HEK293T (cell line): ENCODE measurements at regions of chr4 and their contacts with region 1.

Region 1: GRCh38 chr4:113355550-113356371 is 306.3 kb downstream of the ANK2 start:
- DNase-seq: peak; percentile 8

Region 2: GRCh38 chr4:113260688-113261087 is 95.1 kb before region 1 on chr4:
- CTCF ChIA-PET with region 1: no interaction called
- POLR2A ChIA-PET with region 1: no interaction called
- DNase-seq: no peak

Region 3: DNA sequence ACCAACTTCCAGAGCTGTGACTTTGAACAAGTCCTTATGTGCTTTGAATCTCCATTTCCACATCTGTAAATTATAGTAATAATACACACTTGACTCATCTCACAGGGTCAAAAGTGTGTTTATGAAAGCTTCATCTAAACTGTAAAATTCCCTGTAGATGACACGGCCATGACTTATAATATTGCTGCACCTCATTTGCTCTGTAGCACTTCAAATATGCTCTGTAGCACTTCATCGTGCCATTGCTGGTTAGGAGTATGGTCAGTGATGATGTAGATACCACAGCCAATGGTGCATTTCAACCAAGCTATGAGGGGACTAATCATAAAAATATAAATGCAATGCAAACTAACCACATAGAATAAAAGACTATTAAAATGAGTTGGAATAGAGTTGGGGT is 12.3 kb after region 1 on chr4:
- CTCF ChIA-PET with region 1: interaction called, 11 read pairs
- POLR2A ChIA-PET with region 1: no interaction called
- DNase-seq: no peak